ENCODE measurements at regions of chr15 and their contacts with region 1.

Region 1: DNA sequence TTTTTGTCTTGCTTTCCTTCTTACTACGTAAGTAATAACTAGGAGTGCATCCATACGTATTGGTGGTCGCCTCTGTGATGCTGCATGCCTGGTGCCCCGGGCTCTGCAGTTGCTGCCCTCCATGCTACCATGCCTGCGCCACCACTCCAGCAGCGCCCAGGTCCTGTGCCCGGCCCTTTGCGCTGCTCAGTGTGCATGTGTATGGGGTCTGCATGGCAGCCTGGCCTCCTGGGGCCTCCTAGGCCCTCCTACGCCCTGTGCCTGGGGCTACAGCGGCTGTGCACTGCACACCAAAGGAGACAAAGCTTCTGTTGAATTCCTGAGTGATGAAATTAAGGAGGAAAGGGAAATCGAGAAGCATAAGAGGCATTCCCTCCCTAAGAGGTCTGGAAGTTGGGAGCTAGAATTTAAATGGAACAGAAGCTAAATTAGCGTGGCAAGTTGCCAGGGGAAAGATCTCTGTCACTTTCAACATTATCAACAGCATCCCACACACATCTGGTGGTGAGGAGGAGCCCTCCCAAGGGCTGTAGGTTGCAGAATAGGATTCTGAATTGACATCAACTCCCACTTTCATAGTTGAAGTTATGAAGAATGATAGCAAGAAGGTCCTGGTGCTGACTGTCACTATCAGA is 275.0 kb upstream of the CHRM5 start:
- DNase-seq: no peak
- H3K4me3 Mint-ChIP-seq: no peak overlapping the region
- H3K27ac Mint-ChIP-seq: no peak overlapping the region
- H3K4me1 Mint-ChIP-seq: no peaks in the 10 kb centered on the region
- H3K27me3 Mint-ChIP-seq: peaks cover 18% of the 10 kb centered on the region
- CTCF ChIP-seq: no peak

Region 2: GRCh38 chr15:33292717-33293307 is 400.5 kb before region 1 on chr15:
- CTCF ChIA-PET with region 1: no interaction called
- intact Hi-C with region 1: loop called (anchors 5 kb)
- DNase-seq: peak; percentile 43
- H3K4me3 Mint-ChIP-seq: no peak overlapping the region
- H3K27ac Mint-ChIP-seq: no peak overlapping the region
- H3K4me1 Mint-ChIP-seq: no peaks in the 10 kb centered on the region
- H3K27me3 Mint-ChIP-seq: peaks cover 15% of the 10 kb centered on the region
- CTCF ChIP-seq: peak; percentile 12

Measured in Calu3 (cell line).